Heart left ventricle (tissue), 16 donors: ENCODE measurements at regions of chr21 and their contacts with region 1.

Region 1: GRCh38 chr21:36188081-36188681 is 31.6 kb downstream of the DOP1B start:
- DNase-seq: peak; percentile 69 to 88 (median 70)
- ATAC-seq: peak; percentile 86 to 91 (median 90)
- H3K4me3 ChIP-seq: peak overlapping the region in 1 of 12 donors; percentile 13
- H3K27ac ChIP-seq: peak overlapping the region in 11 of 12 donors; percentile 32 to 80 (median 68)
- H3K4me1 ChIP-seq: peaks cover 0 to 29% (median 16%) of the 10 kb centered on the region in 12 donors
- H3K27me3 ChIP-seq: no peaks in the 10 kb centered on the region
- CTCF ChIP-seq: peak in 6 of 12 donors; percentile 17 to 38 (median 28)
- POLR2A ChIP-seq: no peak

Region 2: GRCh38 chr21:36156339-36156814 is 31.8 kb before region 1 on chr21:
- intact Hi-C with region 1: loop called in 3 of 10 experiments (anchors 1 to 5 kb)
- DNase-seq: peak; percentile 99 to 100 (median 100)
- ATAC-seq: peak; percentile 95 to 98 (median 96)
- H3K4me3 ChIP-seq: peak overlapping the region; percentile 87 to 99 (median 96)
- H3K27ac ChIP-seq: peak overlapping the region; percentile 71 to 94 (median 90)
- H3K4me1 ChIP-seq: peaks cover 0 to 34% (median 13%) of the 10 kb centered on the region in 12 donors
- H3K27me3 ChIP-seq: no peaks in the 10 kb centered on the region
- CTCF ChIP-seq: no peak
- POLR2A ChIP-seq: no peak